ENCODE measurements at regions of chr3 and their contacts with region 1.

Region 1: GRCh38 chr3:47522082-47522987 is 8.8 kb upstream of the ELP6 start:
- DNase-seq: peak; percentile 59 to 86
- ATAC-seq: peak; percentile 96 to 97
- H3K4me3 ChIP-seq: no peak overlapping the region
- H3K27ac ChIP-seq: peak overlapping the region; percentile 5 to 69; a peak in 4 of 6 replicates
- H3K4me1 ChIP-seq: 0 out of 3 replicates have a peak, but pooled peaks cover 3% of the 10 kb centered on the region
- CTCF ChIP-seq: peak; percentile 78
- EP300 ChIP-seq: no peak
- POLR2A ChIP-seq: no peak
- RAD21 ChIP-seq: peak; percentile 93

Region 2: DNA sequence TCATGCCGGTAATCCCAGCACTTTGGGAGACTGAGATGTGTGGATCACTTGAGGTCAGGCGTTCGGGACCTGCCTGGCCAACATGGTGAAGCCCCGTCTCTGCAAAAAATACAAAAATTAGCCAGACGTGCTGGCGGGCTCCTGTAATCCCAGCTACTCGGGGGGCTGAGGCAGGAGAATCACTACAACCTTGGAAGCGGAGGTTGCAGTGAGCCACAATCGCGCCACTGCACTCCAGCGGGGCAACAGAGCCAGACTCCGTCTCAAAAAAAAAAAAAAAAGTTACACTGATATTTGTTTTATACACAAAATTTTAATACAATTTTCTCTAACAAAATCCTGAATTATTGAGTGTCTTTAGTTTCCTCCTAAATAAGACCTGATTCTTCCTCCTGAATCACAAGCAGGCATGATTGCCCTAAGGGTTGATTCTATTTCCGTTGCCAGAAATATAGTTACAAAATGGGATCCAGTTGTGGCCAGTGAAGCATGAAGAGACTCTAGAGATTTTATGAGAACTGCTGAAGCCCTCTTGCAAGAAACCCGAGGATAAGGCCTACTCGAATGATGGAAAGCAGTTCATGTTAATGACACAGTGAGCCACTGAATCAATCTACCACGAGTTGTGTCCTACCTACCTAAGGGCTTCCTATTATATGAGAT is 269.0 kb after region 1 on chr3:
- CTCF ChIA-PET with region 1: interaction called, 78 read pairs
- POLR2A ChIA-PET with region 1: interaction called, 7 read pairs
- DNase-seq: no peak
- ATAC-seq: no peak
- H3K4me3 ChIP-seq: no peak overlapping the region
- H3K27ac ChIP-seq: no peak overlapping the region
- H3K4me1 ChIP-seq: no peaks in the 10 kb centered on the region
- CTCF ChIP-seq: no peak
- EP300 ChIP-seq: no peak
- POLR2A ChIP-seq: no peak
- RAD21 ChIP-seq: no peak